Mammary epithelial cell (primary cell): ENCODE measurements at regions of chr19 and their contacts with region 1.

Region 1: GRCh38 chr19:57382806-57383488 is 6.7 kb upstream of the ZNF548 start:
- DNase-seq: no peak
- H3K4me3 ChIP-seq: no peak overlapping the region
- H3K27ac ChIP-seq: no peak overlapping the region
- H3K4me1 ChIP-seq: no peaks in the 10 kb centered on the region
- H3K27me3 ChIP-seq: no peaks in the 10 kb centered on the region
- CTCF ChIP-seq: no peak

Region 2: GRCh38 chr19:57302020-57302465 is 80.9 kb before region 1 on chr19:
- CTCF ChIA-PET with region 1: no interaction called
- dilution Hi-C with region 1: loop called (anchors 5 kb)
- in situ Hi-C with region 1: no loop called
- intact Hi-C with region 1: no loop called
- DNase-seq: peak; percentile 99
- H3K4me3 ChIP-seq: no peak overlapping the region
- H3K27ac ChIP-seq: peak overlapping the region; percentile 87
- H3K4me1 ChIP-seq: peaks cover 41% of the 10 kb centered on the region
- H3K27me3 ChIP-seq: no peaks in the 10 kb centered on the region
- CTCF ChIP-seq: peak in 1 of 2 donors; percentile 24

Region 3: DNA sequence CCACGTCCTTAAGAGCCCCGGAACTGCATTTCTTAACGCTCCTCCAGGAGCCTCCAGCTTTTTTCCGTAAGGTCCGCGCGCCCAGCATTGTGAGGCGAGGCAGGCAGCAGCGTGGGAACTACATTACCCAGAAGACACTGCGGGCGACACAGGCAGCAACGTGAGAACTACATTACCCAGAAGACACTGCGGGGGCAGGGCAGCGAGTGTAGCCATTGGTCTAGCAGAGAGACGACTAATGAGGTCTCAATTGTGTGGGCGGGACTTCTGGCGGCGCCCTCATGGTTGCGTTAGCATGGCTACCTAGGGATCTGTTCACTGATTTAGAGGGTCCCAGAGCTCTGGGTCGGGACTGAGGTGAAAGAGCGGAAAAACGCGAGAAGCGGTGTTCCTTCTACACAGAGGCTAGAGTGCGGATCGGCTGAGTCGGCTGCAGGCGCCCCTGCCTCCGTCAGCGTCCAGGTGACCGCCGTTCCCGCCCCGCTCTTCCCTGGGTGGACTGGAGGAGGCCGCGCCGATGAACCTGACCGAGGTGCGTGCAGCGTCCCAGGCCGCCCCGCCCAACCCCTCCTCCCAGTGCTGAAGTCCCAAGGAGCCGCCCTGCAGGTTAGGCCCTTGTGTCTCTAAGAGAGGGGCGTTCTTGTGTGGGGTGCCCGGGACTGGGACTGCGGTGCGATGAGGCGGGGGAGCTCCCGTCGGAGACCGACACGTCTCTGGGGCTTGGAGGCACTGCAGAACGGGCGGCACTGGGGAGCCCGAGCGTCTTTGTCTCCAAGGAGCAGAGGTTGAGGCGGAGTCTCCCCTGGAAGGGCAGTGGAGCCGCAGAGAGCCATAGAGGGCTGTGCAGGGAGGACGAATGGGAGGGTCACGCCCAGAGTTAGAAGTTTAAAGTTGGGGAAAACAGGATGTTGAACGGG is 52.4 kb after region 1 on chr19 and contains the start of gene ZNF749:
- CTCF ChIA-PET with region 1: no interaction called
- dilution Hi-C with region 1: loop called (anchors 5 kb)
- in situ Hi-C with region 1: no loop called
- intact Hi-C with region 1: no loop called
- DNase-seq: peak; percentile 97
- H3K4me3 ChIP-seq: peak within 1 kb of the TSS; percentile 71 to 85 (median 82)
- H3K27ac ChIP-seq: peak within 1 kb of the TSS; percentile 75
- H3K4me1 ChIP-seq: peaks cover 9% of the 10 kb centered on the region
- H3K27me3 ChIP-seq: no peaks in the 10 kb centered on the region
- CTCF ChIP-seq: no peak
- total RNA-seq, gene ZNF749: 13.3 to 14.6 TPM